ENCODE measurements at regions of chr6 and their contacts with region 1.

Region 1: DNA sequence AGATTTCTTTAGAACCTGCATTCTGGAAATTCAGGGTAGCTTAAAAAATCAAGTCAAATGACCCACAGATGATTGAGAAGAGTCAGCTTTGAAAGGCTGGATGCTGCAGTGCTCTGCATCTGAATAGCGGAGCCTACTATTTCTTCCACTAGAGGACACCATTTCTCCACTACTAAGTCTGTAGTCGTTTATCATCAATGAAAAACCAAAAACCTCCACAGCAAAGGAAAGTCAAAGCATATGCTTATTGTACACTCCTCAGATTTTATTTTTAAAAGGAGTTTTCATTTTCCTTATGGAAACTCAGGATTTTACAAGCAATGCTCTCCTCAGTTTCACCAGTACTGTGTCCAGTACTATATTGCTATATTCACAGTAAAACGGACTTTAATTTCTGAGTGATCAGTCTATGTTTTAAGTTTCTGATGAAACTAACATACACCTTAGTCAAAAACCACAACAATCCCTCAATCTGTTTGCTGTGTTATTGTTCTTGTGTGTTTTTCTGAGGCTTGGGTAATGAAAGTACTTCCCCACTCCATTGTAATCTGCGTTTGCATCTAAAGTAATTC is 50.5 kb upstream of the ENPP5 start:
- DNase-seq: peak; percentile 16
- ATAC-seq: peak; percentile 54
- H3K4me3 ChIP-seq: no peak overlapping the region
- H3K27ac ChIP-seq: no peak overlapping the region
- H3K4me1 ChIP-seq: no peaks in the 10 kb centered on the region
- H3K27me3 ChIP-seq: no peaks in the 10 kb centered on the region
- CTCF ChIP-seq: peak; percentile 57
- POLR2A ChIP-seq: no peak
- RAD21 ChIP-seq: peak; percentile 55

Region 2: GRCh38 chr6:46393940-46394337 is 172.6 kb after region 1 on chr6:
- CTCF ChIA-PET with region 1: no interaction called
- POLR2A ChIA-PET with region 1: no interaction called
- dilution Hi-C with region 1: no loop called
- in situ Hi-C with region 1: no loop called
- intact Hi-C with region 1: no loop called
- DNase-seq: no peak
- ATAC-seq: no peak
- H3K4me3 ChIP-seq: no peak overlapping the region
- H3K27ac ChIP-seq: no peak overlapping the region
- H3K4me1 ChIP-seq: no peaks in the 10 kb centered on the region
- H3K27me3 ChIP-seq: no peaks in the 10 kb centered on the region
- CTCF ChIP-seq: no peak
- POLR2A ChIP-seq: no peak
- RAD21 ChIP-seq: no peak

Region 3: GRCh38 chr6:46410334-46410953 is 189.1 kb after region 1 on chr6:
- CTCF ChIA-PET with region 1: interaction called, 3 read pairs
- POLR2A ChIA-PET with region 1: no interaction called
- dilution Hi-C with region 1: no loop called
- in situ Hi-C with region 1: no loop called
- intact Hi-C with region 1: loop called (anchors 1 kb)
- DNase-seq: peak; percentile 42
- ATAC-seq: no peak
- H3K4me3 ChIP-seq: no peak overlapping the region
- H3K27ac ChIP-seq: no peak overlapping the region
- H3K4me1 ChIP-seq: peaks cover 2% of the 10 kb centered on the region; the same call in 1 of the 2 replicates
- H3K27me3 ChIP-seq: peaks cover 4% of the 10 kb centered on the region; the same call in 1 of the 2 replicates
- CTCF ChIP-seq: peak; percentile 72
- POLR2A ChIP-seq: no peak
- RAD21 ChIP-seq: peak; percentile 69

Region 4: GRCh38 chr6:46626228-46626909 is 405.1 kb after region 1 on chr6:
- CTCF ChIA-PET with region 1: interaction called, 3 read pairs
- POLR2A ChIA-PET with region 1: no interaction called
- dilution Hi-C with region 1: no loop called
- in situ Hi-C with region 1: no loop called
- intact Hi-C with region 1: loop called (anchors 5 kb)
- DNase-seq: peak; percentile 21
- ATAC-seq: peak; percentile 57; the same call in 1 of the 2 replicates
- H3K4me3 ChIP-seq: no peak overlapping the region
- H3K27ac ChIP-seq: no peak overlapping the region
- H3K4me1 ChIP-seq: no peaks in the 10 kb centered on the region
- H3K27me3 ChIP-seq: no peaks in the 10 kb centered on the region
- CTCF ChIP-seq: peak; percentile 57
- POLR2A ChIP-seq: no peak
- RAD21 ChIP-seq: peak; percentile 56

Region 5: DNA sequence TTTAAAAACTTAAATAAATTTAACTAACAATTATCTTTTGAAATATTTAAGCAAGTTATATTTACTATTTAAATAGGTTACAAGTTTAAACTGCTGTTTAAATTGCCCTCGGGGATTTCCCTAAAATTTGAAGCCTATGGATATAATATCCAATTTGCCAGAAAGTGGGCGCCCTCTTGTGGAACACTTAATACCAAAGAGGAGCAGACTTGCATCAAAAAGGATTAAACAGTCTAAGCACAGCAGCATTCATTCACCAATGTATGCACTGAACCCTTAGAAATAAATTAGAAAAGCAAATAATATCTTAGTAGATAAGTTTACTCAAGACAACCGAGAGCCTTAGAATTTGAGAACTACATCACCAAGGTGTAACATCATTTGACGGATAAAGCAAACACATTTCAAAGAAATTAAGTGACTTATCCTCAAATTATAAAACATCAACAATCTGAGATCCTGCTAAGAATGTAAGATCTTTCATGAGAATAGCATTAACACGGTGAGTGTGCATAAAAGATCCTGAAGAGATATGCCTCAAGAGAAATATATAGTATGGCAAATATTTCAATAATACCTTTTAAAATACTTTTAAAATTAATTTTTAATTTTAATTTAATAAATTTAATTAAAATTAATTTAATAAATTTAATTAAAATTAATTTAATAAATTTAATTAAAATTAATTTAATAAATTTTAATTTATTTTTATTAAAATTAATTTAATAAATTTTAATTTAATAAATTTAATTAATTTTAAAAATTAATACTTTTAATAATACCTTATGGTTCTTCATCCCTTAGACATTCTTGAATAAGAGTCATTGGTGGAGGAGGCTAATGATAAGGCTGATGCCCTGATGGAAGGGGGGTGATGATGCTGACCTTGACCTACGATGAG is 560.4 kb after region 1 on chr6:
- CTCF ChIA-PET with region 1: no interaction called
- POLR2A ChIA-PET with region 1: no interaction called
- dilution Hi-C with region 1: no loop called
- in situ Hi-C with region 1: no loop called
- intact Hi-C with region 1: loop called (anchors 10 kb)
- DNase-seq: peak; percentile 50
- ATAC-seq: peak; percentile 66; the same call in 1 of the 2 replicates
- H3K4me3 ChIP-seq: no peak overlapping the region
- H3K27ac ChIP-seq: no peak overlapping the region
- H3K4me1 ChIP-seq: no peaks in the 10 kb centered on the region
- H3K27me3 ChIP-seq: no peaks in the 10 kb centered on the region
- CTCF ChIP-seq: peak; percentile 59
- POLR2A ChIP-seq: no peak
- RAD21 ChIP-seq: peak; percentile 56

Measured in IMR-90 (cell line).